Activated T-helper 1 cell treated with anti-CD3 and anti-CD28 coated beads, Interleukin-12 subunit alpha, Interleukin-12 subunit beta, Interleukin-2, Interleukin-4 antibody, amounts not matched to agents 30 ng/mL and 10 ng/mL and 1 ng/mL, durations not matched to agents 14 hours and 24 hours and 36 hours (primary cell): ENCODE measurements at regions of chr12 and their contacts with region 1.

Region 1: DNA sequence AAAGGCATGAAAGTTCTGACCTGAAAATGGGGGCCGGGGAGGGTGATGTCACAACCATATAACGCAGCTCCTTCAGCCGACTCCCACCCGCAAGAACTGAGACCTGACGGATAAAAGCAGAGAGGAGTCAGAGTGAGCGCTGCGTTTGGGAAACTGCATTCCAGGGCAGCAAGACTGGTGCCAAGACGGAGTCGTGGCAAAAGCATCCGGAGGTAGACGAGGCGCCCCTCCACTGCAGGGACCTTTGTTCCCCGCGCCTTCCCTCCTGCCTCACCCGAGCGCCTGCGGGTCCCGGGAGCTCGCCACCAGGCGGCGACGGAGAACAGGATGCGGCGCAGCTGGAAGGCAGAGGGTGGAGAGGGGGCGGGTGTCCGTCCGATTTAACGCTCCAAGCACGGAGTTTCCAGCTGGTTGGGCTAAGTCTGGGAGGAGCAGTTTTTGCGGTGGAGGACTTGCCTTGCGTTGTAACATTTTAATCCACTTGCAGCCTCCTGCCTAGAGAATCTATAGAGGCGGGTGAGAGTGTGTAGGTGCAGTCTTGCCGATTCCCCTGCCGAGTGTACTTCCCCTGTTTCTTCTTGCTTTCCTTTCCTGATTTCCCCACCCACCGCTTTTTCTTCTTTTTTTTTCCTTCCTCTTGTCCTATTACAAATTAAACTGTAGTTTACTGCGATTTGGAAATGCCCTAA is 1.2 kb upstream of the CPNE8 start:
- DNase-seq: peak; percentile 64
- H3K4me3 Mint-ChIP-seq: peak overlapping the region; percentile 88
- H3K27ac Mint-ChIP-seq: peak overlapping the region; percentile 84
- H3K4me1 Mint-ChIP-seq: peaks cover 32% of the 10 kb centered on the region
- H3K27me3 Mint-ChIP-seq: peaks cover 18% of the 10 kb centered on the region

Region 2: DNA sequence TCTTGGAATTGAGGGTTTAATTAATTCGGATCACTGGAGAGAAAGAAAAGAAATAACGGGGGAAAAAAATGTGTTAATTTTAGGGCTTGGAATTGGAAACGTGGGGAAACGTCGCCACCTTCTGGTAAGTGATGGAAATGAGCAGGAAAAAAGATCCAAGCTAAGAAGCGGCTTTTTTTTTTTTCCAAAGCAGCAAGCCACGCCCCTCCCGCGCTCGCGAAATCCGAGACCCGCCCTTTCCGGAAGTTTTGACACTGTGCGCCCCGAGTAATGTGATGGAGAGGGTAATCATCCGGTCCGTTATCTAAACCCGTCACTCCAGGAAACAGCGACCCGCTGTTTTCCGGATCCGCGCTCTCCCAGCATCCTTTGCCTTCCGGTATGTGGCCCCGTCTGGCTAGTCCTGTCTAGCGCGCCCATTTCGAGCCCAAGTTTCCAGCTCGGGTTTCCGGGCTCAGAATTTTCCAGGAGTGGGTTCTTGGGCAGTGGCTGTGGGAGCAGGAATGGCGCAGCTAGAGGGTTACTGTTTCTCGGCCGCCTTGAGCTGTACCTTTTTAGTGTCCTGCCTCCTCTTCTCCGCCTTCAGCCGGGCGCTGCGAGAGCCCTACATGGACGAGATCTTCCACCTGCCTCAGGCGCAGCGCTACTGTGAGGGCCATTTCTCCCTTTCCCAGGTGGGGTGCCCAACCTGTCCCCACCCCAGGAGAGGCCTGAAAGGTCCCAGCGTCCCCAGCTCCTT is 590.1 kb before region 1 on chr12 and contains the start of gene ALG10B:
- intact Hi-C with region 1: loop called (anchors 1 kb)
- DNase-seq: peak; percentile 90
- H3K4me3 Mint-ChIP-seq: peak within 1 kb of the TSS; percentile 97
- H3K27ac Mint-ChIP-seq: peak within 1 kb of the TSS; percentile 90
- H3K4me1 Mint-ChIP-seq: peaks cover 25% of the 10 kb centered on the region
- H3K27me3 Mint-ChIP-seq: no peaks in the 10 kb centered on the region
- total RNA-seq, gene ALG10B: 11.8 and 15.9 TPM in 2 replicates

Region 3: DNA sequence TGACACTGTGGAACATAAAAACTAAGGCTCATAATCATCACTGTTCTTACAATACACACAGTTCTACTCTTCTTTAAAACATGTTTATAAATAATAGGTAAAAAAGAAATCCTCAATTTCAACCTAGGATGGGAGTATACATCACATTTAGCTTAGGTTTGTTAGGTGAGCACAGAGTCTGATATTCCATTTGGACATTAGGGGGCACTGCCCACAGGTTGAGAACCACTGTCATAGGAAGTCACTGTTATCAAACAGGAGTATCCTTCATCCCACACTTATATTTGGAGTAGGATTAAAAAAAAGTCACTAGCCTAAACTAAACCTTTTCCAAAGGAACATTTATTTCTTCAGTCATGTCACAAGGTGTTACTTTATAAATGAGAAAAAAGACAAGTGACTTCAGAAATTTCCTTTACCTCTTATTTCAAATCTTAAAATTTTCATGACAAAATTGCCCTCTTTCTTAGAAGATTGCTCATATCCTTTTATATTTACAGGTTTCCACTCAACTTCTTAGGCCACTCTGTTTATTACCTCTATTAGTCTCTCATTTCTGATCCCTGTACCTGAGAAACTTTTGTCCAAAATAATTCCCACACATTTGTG is 241.9 kb before region 1 on chr12:
- intact Hi-C with region 1: loop called (anchors 5 kb)
- DNase-seq: no peak
- H3K4me3 Mint-ChIP-seq: no peak overlapping the region
- H3K27ac Mint-ChIP-seq: no peak overlapping the region
- H3K4me1 Mint-ChIP-seq: no peaks in the 10 kb centered on the region
- H3K27me3 Mint-ChIP-seq: no peaks in the 10 kb centered on the region

Region 4: GRCh38 chr12:38771871-38772270 is 134.8 kb before region 1 on chr12:
- intact Hi-C with region 1: loop called (anchors 1 kb)
- DNase-seq: no peak
- H3K4me3 Mint-ChIP-seq: no peak overlapping the region
- H3K27ac Mint-ChIP-seq: no peak overlapping the region
- H3K4me1 Mint-ChIP-seq: peaks cover 6% of the 10 kb centered on the region
- H3K27me3 Mint-ChIP-seq: peaks cover 3% of the 10 kb centered on the region

Region 5: GRCh38 chr12:38892090-38892786 is 14.4 kb before region 1 on chr12:
- intact Hi-C with region 1: loop called (anchors 1 kb)
- DNase-seq: no peak
- H3K4me3 Mint-ChIP-seq: no peak overlapping the region
- H3K27ac Mint-ChIP-seq: no peak overlapping the region
- H3K4me1 Mint-ChIP-seq: peaks cover 15% of the 10 kb centered on the region
- H3K27me3 Mint-ChIP-seq: no peaks in the 10 kb centered on the region

Region 6: GRCh38 chr12:39103552-39104165 is 197.0 kb after region 1 on chr12:
- intact Hi-C with region 1: loop called (anchors 5 kb)
- DNase-seq: peak; percentile 6
- H3K4me3 Mint-ChIP-seq: no peak overlapping the region
- H3K27ac Mint-ChIP-seq: no peak overlapping the region
- H3K4me1 Mint-ChIP-seq: no peaks in the 10 kb centered on the region
- H3K27me3 Mint-ChIP-seq: peaks cover 4% of the 10 kb centered on the region